Endothelial cell of umbilical vein (primary cell): ENCODE measurements at regions of chr22 and their contacts with region 1.

Region 1: GRCh38 chr22:44080936-44081861 is 57.1 kb downstream of the PARVB start:
- DNase-seq: peak; percentile 51
- H3K4me3 ChIP-seq: no peak overlapping the region
- H3K27ac ChIP-seq: no peak overlapping the region
- H3K4me1 ChIP-seq: no peaks in the 10 kb centered on the region
- H3K27me3 ChIP-seq: no peaks in the 10 kb centered on the region
- CTCF ChIP-seq: peak; percentile 84 to 90
- POLR2A ChIP-seq: no peak

Region 2: DNA sequence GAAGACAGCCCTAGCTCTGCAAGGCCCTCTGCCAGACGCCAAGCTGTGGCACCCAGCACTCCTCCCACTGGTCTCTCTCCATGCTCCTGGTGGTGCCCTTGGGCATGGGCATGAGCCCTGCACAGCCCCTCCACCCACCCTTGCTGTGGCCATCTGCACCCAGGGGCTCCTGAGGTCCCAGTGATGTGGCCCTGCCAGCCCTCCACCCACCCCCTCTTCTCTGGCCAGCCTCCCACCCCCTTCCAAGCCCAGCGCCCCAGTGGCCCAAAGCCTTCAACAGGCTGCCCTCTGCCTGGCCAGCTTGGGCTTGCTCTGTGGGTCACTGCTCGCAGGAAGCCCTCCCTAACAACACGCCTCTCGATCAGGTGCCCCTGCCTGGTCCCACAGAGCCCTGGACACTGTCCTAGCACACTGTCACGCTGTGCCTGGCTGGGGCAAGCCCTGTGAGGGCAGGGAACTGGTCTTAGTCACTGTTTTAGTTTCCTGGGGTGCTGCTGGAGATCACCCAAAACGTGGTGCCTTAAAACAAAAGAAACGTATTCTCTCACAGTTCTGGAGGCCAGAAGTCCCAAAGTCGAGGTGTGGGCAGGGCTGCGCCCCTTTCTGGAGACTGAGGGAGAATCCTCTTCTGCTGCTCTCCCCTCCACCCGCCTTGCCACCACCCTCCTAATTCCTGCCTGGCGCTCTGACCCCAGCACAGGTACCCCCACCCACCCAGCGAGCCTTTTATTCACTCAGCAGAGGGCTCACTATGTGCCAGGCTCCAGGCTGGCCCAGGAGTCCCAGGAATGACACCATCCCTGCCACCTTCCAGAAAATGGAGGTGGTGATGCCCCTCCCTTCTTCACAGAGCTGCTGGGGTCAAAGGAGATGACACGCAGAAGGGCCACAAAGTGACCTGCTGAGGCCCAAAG is 233.6 kb before region 1 on chr22:
- CTCF ChIA-PET with region 1: no interaction called
- POLR2A ChIA-PET with region 1: no interaction called
- dilution Hi-C with region 1: no loop called
- intact Hi-C with region 1: no loop called
- DNase-seq: no peak
- H3K4me3 ChIP-seq: no peak overlapping the region
- H3K27ac ChIP-seq: no peak overlapping the region
- H3K4me1 ChIP-seq: peaks cover 10% of the 10 kb centered on the region
- H3K27me3 ChIP-seq: no peaks in the 10 kb centered on the region
- CTCF ChIP-seq: no peak
- POLR2A ChIP-seq: no peak

Region 3: DNA sequence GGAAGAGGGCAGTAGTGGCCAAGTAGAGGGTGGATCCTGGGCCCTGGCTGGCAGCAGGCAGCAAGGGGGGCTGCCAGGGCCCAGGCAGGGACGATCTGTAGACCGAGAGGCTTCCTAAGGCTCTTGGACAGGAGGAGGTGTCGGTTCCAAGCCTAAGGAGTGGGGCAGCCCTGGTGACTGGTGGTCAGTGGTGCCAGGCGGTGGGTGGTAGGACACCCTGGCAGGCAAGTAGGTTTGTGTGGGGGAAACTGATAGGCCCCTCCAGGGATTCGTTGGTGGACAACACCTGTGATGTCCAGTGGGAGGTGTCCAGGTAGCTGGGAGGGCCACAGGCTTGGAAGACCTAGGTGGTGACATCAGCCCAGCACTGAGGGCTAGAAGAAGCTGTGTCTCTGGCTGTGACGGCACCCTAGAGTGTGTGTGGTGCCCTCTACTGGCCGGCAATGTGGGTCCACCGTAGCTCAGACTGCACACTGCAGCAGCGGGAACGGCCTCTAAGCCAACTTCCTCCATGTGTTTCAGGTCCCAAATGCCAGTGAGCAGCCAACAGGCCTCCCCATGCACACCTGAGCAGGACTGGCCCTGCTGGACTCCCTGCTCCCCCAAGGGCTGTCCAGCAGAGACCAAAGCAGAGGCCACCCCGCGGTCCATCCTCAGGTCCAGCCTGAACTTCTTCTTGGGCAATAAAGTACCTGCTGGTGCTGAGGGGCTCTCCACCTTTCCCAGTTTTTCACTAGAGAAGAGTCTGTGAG is 135.4 kb before region 1 on chr22:
- CTCF ChIA-PET with region 1: interaction called, 13 read pairs
- POLR2A ChIA-PET with region 1: no interaction called
- dilution Hi-C with region 1: no loop called
- intact Hi-C with region 1: no loop called
- DNase-seq: peak; percentile 63
- H3K4me3 ChIP-seq: no peak overlapping the region
- H3K27ac ChIP-seq: no peak overlapping the region
- H3K4me1 ChIP-seq: no peaks in the 10 kb centered on the region
- H3K27me3 ChIP-seq: no peaks in the 10 kb centered on the region
- CTCF ChIP-seq: peak; percentile 91 to 97
- POLR2A ChIP-seq: no peak

Region 4: DNA sequence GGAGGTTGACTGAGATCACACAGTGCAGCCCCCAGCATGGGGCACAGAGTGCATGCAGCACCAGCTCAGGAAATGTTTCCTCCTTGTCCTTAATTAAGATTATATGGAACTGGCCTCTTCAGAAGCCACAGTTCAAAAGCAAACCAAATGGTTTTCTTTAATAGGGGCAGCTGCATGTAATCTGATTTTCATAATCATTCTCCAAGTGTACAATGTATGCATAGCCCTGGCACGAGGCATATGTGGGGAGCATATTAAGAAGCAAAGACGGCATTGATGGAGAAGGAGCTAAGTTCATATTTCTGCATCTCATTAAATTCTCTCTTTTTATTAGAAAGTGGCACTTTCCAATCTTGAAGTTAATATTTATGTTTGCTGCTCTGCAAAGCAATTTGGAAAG is 67.0 kb before region 1 on chr22:
- CTCF ChIA-PET with region 1: interaction called, 16 read pairs
- POLR2A ChIA-PET with region 1: no interaction called
- dilution Hi-C with region 1: no loop called
- intact Hi-C with region 1: no loop called
- DNase-seq: no peak
- H3K4me3 ChIP-seq: no peak overlapping the region
- H3K27ac ChIP-seq: no peak overlapping the region
- H3K4me1 ChIP-seq: no peaks in the 10 kb centered on the region
- H3K27me3 ChIP-seq: no peaks in the 10 kb centered on the region
- CTCF ChIP-seq: no peak
- POLR2A ChIP-seq: no peak

Region 5: DNA sequence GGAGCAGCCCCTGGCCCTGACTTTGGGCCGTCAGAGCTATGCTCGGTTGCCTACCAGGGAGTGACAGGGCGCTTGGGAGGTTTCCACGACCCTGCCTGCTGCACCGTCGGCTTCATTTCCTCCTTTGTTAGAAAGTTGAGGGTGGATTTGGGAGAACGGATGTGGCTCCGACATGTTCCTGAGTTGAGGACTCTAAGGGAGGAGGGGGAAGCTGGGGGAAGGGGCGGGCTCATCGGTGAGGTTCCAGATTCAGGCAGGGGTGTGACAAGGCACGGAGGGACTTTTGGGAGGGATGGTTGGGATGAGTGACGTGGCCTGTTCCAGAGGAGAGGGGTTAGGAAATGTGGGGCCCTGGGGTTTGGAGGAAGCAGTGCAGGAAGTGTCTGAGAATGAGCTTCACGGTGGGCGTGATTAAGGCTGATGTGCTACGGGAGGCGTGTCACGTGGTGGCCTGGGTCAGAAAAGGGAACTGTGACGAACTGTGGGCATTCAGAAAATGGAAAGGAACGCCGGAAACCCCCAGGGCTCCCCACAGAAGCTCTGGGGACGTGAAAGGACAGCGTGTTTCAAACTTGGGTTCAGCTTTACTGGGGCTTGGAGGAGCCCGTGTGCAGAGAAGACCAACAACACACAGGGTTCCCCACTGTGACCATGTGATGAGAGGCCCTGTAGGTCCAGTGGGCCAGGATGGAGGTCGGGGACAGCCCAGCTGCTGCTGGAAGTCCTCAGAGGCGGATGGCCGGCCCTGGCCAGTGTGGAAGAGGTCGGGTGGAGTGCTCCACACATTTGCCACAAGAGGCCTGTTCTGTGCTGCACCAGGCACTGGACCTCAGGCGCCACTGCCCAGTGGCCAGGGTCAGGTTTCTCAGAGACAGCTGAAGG is 54.3 kb before region 1 on chr22:
- CTCF ChIA-PET with region 1: interaction called, 24 read pairs
- POLR2A ChIA-PET with region 1: no interaction called
- dilution Hi-C with region 1: no loop called
- intact Hi-C with region 1: loop called (anchors 1 kb)
- DNase-seq: peak; percentile 88
- H3K4me3 ChIP-seq: peak overlapping the region in 2 of 3 experiments; percentile 18 to 52
- H3K27ac ChIP-seq: peak overlapping the region; percentile 99
- H3K4me1 ChIP-seq: peaks cover 66% of the 10 kb centered on the region
- H3K27me3 ChIP-seq: no peaks in the 10 kb centered on the region
- CTCF ChIP-seq: no peak
- POLR2A ChIP-seq: peak; percentile 70

Region 6: GRCh38 chr22:44567846-44568493 is 486.8 kb after region 1 on chr22:
- CTCF ChIA-PET with region 1: interaction called, 11 read pairs
- POLR2A ChIA-PET with region 1: no interaction called
- dilution Hi-C with region 1: no loop called
- intact Hi-C with region 1: no loop called
- DNase-seq: peak; percentile 27
- H3K4me3 ChIP-seq: no peak overlapping the region
- H3K27ac ChIP-seq: no peak overlapping the region
- H3K4me1 ChIP-seq: no peaks in the 10 kb centered on the region
- H3K27me3 ChIP-seq: peaks cover 0 to 2% of the 10 kb centered on the region in 2 experiments
- CTCF ChIP-seq: peak; percentile 35 to 65
- POLR2A ChIP-seq: no peak